CD8-positive, alpha-beta T cell (primary cell): ENCODE measurements at regions of chr21 and their contacts with region 1.

Region 1: GRCh38 chr21:38733973-38734546 is 71.7 kb upstream of the ETS2 start:
- DNase-seq: peak; percentile 48 to 84 (median 68)
- ATAC-seq: peak; percentile 62
- H3K4me3 ChIP-seq: peak overlapping the region; percentile 22 to 68
- H3K4me3 Mint-ChIP-seq: peak overlapping the region; percentile 79
- H3K27ac ChIP-seq: no peak overlapping the region
- H3K27ac Mint-ChIP-seq: no peak overlapping the region
- H3K4me1 ChIP-seq: peaks cover 4% of the 10 kb centered on the region
- H3K4me1 Mint-ChIP-seq: peaks cover 9% of the 10 kb centered on the region
- H3K27me3 ChIP-seq: peaks cover 8 to 14% of the 10 kb centered on the region in 2 experiments
- H3K27me3 Mint-ChIP-seq: peaks cover 19% of the 10 kb centered on the region
- CTCF ChIP-seq: peak; percentile 99

Region 2: DNA sequence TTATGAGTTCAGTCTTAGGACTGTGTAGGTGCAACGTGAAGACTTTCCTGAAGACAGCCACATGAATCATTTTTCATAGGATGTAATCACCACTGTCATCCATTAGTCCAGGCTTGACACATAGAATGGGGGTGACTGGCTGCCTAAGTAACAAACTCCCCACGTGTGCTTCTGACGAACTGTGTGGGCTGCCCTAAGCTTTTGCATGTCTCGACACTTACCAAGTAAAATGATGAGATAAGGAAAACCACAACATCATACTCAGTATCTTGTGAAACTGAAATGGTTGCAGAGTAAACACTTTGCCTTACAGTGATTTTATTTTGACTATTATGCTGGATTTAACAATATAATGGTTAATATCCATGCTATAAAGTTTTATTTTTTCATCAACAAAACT is 255.3 kb before region 1 on chr21:
- CTCF ChIA-PET with region 1: no interaction called
- POLR2A ChIA-PET with region 1: no interaction called
- intact Hi-C with region 1: no loop called
- DNase-seq: peak in 1 of 9 experiments; percentile 17
- ATAC-seq: no peak
- H3K4me3 ChIP-seq: no peak overlapping the region
- H3K4me3 Mint-ChIP-seq: no peak overlapping the region
- H3K27ac ChIP-seq: no peak overlapping the region
- H3K27ac Mint-ChIP-seq: no peak overlapping the region
- H3K4me1 ChIP-seq: no peaks in the 10 kb centered on the region
- H3K4me1 Mint-ChIP-seq: peaks cover 3% of the 10 kb centered on the region
- H3K27me3 ChIP-seq: peaks cover 0 to 12% of the 10 kb centered on the region in 2 experiments
- H3K27me3 Mint-ChIP-seq: peaks cover 37% of the 10 kb centered on the region
- CTCF ChIP-seq: no peak

Region 3: GRCh38 chr21:38702196-38702595 is 31.9 kb before region 1 on chr21:
- CTCF ChIA-PET with region 1: no interaction called
- POLR2A ChIA-PET with region 1: no interaction called
- intact Hi-C with region 1: no loop called
- DNase-seq: no peak
- ATAC-seq: no peak
- H3K4me3 ChIP-seq: no peak overlapping the region
- H3K4me3 Mint-ChIP-seq: no peak overlapping the region
- H3K27ac ChIP-seq: no peak overlapping the region
- H3K27ac Mint-ChIP-seq: no peak overlapping the region
- H3K4me1 ChIP-seq: no peaks in the 10 kb centered on the region
- H3K4me1 Mint-ChIP-seq: no peaks in the 10 kb centered on the region
- H3K27me3 ChIP-seq: peaks cover 0 to 4% of the 10 kb centered on the region in 2 experiments
- H3K27me3 Mint-ChIP-seq: peaks cover 17% of the 10 kb centered on the region
- CTCF ChIP-seq: no peak

Region 4: DNA sequence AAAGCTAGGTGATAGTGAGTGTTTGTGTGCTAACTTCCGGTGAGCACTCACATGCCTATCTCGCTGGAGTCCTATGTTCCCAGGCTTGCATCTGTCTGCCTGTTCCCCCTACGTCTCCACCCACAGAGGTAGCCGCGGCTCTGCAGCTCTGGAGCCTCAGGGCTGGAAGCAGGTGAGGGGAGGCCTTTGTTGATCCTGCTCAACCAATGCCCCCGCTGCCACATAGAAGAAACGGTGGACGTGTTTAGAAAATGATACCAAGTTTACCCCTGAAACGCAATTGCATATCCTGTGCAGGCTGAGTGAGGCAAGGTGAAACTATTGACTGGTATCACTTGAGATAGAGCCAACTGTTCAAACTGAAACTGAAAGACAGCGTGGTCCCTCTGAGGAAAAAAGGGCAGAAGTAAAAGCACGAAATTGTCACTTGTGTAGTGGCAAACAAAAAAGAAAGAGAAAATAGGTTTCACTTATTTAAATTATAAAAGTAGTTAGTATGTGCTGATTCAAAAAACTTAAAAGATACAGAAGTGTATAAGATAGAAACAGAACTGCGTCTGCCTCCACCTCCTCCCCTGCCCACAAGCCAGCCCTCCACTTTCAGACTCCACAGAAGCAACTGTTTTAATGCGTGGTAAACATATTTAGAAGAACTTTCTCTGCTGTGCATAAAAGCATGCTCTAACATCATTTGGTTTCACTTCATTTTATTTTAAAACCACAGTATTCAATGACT is 33.1 kb after region 1 on chr21:
- CTCF ChIA-PET with region 1: interaction called, 4 read pairs
- POLR2A ChIA-PET with region 1: no interaction called
- intact Hi-C with region 1: loop called in 1 of 2 experiments (anchors 2 kb)
- DNase-seq: peak; percentile 13 to 88 (median 46)
- ATAC-seq: peak; percentile 85
- H3K4me3 ChIP-seq: peak overlapping the region; percentile 54 to 55
- H3K4me3 Mint-ChIP-seq: peak overlapping the region; percentile 82
- H3K27ac ChIP-seq: peak overlapping the region; percentile 69 to 82
- H3K27ac Mint-ChIP-seq: peak overlapping the region; percentile 96
- H3K4me1 ChIP-seq: peaks cover 21% of the 10 kb centered on the region
- H3K4me1 Mint-ChIP-seq: peaks cover 32% of the 10 kb centered on the region
- H3K27me3 ChIP-seq: no peaks in the 10 kb centered on the region
- H3K27me3 Mint-ChIP-seq: no peaks in the 10 kb centered on the region
- CTCF ChIP-seq: no peak

Region 5: DNA sequence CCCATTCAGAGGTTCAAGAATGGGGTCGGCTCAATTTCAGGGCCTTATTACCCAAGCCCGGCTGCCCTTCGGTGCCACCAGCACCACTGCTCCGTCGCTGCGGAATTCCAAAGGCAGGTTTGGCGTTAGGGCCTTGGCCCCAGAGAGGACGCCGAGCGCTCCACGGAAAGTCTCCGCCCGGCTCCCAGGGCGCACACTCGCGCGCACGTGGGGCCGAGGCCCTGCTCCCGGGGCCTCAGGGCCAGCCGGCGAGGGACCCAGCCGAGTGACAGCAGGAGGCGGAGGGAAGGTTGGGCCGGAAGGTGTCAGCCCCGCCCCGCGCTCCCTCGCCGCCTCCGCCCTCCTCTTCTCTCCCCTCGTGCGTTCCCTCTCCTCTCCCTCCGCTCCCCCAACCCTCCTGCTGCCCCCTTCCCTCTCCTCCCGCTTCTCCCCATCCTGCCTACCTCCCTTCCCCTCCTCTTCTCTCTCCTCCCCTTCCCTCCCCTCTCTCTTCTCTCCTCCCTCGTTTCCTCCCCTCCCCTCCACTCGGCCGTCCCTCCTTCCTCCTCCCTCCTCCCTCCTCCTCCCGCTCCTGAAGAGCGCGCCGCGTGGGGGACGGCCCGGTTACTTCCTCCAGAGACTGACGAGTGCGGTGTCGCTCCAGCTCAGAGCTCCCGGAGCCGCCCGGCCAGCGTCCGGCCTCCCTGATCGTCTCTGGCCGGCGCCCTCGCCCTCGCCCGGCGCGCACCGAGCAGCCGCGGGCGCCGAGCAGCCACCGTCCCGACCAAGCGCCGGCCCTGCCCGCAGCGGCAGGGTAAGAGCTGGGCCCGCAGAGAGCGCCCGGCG is 71.5 kb after region 1 on chr21 and contains the start of gene ETS2:
- CTCF ChIA-PET with region 1: no interaction called
- POLR2A ChIA-PET with region 1: no interaction called
- intact Hi-C with region 1: loop called (anchors 1 to 2 kb)
- DNase-seq: peak; percentile 33 to 84 (median 63)
- ATAC-seq: peak; percentile 83
- H3K4me3 ChIP-seq: peak within 1 kb of the TSS; percentile 74 to 79
- H3K4me3 Mint-ChIP-seq: peak within 1 kb of the TSS; percentile 84
- H3K27ac ChIP-seq: peak within 1 kb of the TSS; percentile 51 to 59
- H3K27ac Mint-ChIP-seq: peak within 1 kb of the TSS; percentile 73
- H3K4me1 ChIP-seq: peaks cover 8% of the 10 kb centered on the region
- H3K4me1 Mint-ChIP-seq: peaks cover 31% of the 10 kb centered on the region
- H3K27me3 ChIP-seq: no peaks in the 10 kb centered on the region
- H3K27me3 Mint-ChIP-seq: peaks cover 2% of the 10 kb centered on the region
- CTCF ChIP-seq: no peak
- total RNA-seq, gene ETS2: 8.1 to 10.0 TPM

Region 6: DNA sequence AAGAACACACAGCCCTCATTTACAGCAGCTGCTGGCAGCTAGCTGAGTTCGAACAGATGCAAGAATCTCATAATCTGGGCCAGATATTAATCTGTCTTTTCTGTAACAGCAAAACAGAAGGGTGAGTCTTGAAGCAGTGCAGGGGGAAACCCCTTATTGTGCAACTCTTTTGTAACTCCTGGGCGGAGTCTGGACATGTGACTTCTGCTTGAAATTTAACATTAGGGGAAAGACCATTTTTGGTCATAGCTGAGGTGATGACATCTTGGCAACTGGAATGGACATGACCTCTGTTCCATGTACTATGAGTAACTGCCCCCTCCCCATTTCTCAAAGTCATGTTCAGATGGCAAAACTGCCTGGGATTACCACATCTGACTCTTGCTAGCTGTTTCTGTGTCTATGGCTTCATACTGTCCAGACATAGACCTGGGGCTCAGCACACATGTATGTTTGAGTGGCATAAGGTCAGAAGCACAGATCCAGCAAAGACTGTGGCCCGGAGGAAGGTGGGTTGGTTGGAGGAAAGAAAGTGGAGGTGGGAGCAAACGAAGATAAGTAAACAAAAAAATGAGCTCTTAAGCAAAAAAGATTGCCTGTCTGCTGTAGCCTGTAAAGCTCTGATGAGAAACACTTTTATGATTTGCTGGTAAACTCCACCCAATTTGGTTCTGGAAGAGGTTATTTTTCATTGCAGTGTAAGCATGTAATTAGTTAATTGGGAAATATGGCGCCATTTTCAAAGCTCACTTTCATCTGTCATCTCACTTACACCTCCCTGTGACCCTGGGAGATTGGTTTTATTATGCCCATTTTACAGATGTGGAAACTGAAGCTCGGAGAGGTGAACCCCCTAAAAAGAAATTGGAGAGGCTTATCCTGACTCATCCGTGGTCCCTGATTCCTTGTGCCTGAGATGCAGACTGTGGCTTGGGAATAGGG is 97.7 kb after region 1 on chr21:
- CTCF ChIA-PET with region 1: interaction called, 8 read pairs
- POLR2A ChIA-PET with region 1: no interaction called
- intact Hi-C with region 1: loop called (anchors 5 kb)
- DNase-seq: peak in 4 of 9 experiments; percentile 16 to 68 (median 57)
- ATAC-seq: peak; percentile 85
- H3K4me3 ChIP-seq: no peak overlapping the region
- H3K4me3 Mint-ChIP-seq: no peak overlapping the region
- H3K27ac ChIP-seq: no peak overlapping the region
- H3K27ac Mint-ChIP-seq: peak overlapping the region; percentile 0
- H3K4me1 ChIP-seq: no peaks in the 10 kb centered on the region
- H3K4me1 Mint-ChIP-seq: peaks cover 9% of the 10 kb centered on the region
- H3K27me3 ChIP-seq: no peaks in the 10 kb centered on the region
- H3K27me3 Mint-ChIP-seq: peaks cover 7% of the 10 kb centered on the region
- CTCF ChIP-seq: no peak

Region 7: GRCh38 chr21:39137248-39138178 is 403.5 kb after region 1 on chr21:
- CTCF ChIA-PET with region 1: interaction called, 27 read pairs
- POLR2A ChIA-PET with region 1: no interaction called
- intact Hi-C with region 1: loop called (anchors 1 kb)
- DNase-seq: no peak
- ATAC-seq: no peak
- H3K4me3 ChIP-seq: no peak overlapping the region
- H3K4me3 Mint-ChIP-seq: no peak overlapping the region
- H3K27ac ChIP-seq: no peak overlapping the region
- H3K27ac Mint-ChIP-seq: no peak overlapping the region
- H3K4me1 ChIP-seq: no peaks in the 10 kb centered on the region
- H3K4me1 Mint-ChIP-seq: no peaks in the 10 kb centered on the region
- H3K27me3 ChIP-seq: no peaks in the 10 kb centered on the region
- H3K27me3 Mint-ChIP-seq: peaks cover 3% of the 10 kb centered on the region
- CTCF ChIP-seq: no peak

Region 8: GRCh38 chr21:39175154-39175553 is 441.1 kb after region 1 on chr21:
- CTCF ChIA-PET with region 1: interaction called, 4 read pairs
- POLR2A ChIA-PET with region 1: no interaction called
- intact Hi-C with region 1: loop called (anchors 1 to 2 kb)
- DNase-seq: peak in 2 of 9 experiments; percentile 25 to 34
- ATAC-seq: no peak
- H3K4me3 ChIP-seq: no peak overlapping the region
- H3K4me3 Mint-ChIP-seq: no peak overlapping the region
- H3K27ac ChIP-seq: no peak overlapping the region
- H3K27ac Mint-ChIP-seq: no peak overlapping the region
- H3K4me1 ChIP-seq: peaks cover 2% of the 10 kb centered on the region
- H3K4me1 Mint-ChIP-seq: peaks cover 2% of the 10 kb centered on the region
- H3K27me3 ChIP-seq: no peaks in the 10 kb centered on the region
- H3K27me3 Mint-ChIP-seq: no peaks in the 10 kb centered on the region
- CTCF ChIP-seq: peak; percentile 66